ENCODE measurements at regions of chr6 and their contacts with region 1.

Region 1: GRCh38 chr6:2738373-2738979 is 12.2 kb downstream of the MYLK4 start:
- DNase-seq: peak; percentile 70
- ATAC-seq: peak; percentile 62
- H3K4me3 Mint-ChIP-seq: no peak overlapping the region
- H3K27ac Mint-ChIP-seq: no peak overlapping the region
- H3K4me1 Mint-ChIP-seq: peaks cover 5% of the 10 kb centered on the region
- H3K27me3 Mint-ChIP-seq: no peaks in the 10 kb centered on the region

Region 2: DNA sequence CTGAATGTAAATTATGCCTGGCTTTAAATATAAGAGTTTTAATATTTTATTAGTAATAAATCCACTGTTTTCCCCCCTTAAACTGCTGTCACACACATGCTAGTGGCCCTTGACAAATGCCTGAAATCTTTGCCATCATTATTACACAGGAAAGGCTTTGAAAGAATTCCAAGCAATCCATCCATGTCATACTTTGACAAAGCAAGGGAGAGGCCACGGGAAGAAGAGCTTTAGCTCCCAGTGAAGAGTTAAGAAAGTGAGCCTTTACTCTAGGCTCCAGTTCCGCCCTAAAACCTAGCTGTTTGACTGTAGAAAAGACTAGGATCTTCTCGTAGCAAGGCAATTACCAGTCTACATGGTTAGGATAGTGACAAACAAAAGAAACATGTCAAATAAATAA is 641.0 kb before region 1 on chr6:
- CTCF ChIA-PET with region 1: no interaction called
- POLR2A ChIA-PET with region 1: no interaction called
- intact Hi-C with region 1: no loop called
- DNase-seq: no peak
- ATAC-seq: no peak
- H3K4me3 Mint-ChIP-seq: no peak overlapping the region
- H3K27ac Mint-ChIP-seq: no peak overlapping the region
- H3K4me1 Mint-ChIP-seq: no peaks in the 10 kb centered on the region
- H3K27me3 Mint-ChIP-seq: no peaks in the 10 kb centered on the region

Region 3: DNA sequence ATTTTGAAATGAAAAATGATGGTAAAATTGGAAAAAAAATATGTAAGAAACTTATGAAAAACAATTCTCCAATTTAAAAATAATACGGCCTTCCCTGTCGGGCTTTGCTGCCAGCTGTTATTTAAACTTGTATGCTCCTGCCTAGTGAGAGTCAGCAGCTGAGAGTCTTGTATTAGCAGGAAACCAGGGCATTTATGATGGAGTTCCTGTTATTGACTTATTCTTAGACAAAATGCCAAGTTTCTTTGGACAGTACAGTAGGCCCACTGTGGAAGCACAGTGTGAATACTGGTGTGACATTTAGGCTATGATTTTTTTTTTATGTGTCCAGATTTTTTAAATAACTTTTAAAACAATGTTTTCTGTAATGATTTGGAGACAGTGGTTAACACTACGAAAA is 535.2 kb before region 1 on chr6:
- CTCF ChIA-PET with region 1: no interaction called
- POLR2A ChIA-PET with region 1: no interaction called
- intact Hi-C with region 1: no loop called
- DNase-seq: no peak
- ATAC-seq: no peak
- H3K4me3 Mint-ChIP-seq: no peak overlapping the region
- H3K27ac Mint-ChIP-seq: no peak overlapping the region
- H3K4me1 Mint-ChIP-seq: no peaks in the 10 kb centered on the region
- H3K27me3 Mint-ChIP-seq: no peaks in the 10 kb centered on the region

Region 4: DNA sequence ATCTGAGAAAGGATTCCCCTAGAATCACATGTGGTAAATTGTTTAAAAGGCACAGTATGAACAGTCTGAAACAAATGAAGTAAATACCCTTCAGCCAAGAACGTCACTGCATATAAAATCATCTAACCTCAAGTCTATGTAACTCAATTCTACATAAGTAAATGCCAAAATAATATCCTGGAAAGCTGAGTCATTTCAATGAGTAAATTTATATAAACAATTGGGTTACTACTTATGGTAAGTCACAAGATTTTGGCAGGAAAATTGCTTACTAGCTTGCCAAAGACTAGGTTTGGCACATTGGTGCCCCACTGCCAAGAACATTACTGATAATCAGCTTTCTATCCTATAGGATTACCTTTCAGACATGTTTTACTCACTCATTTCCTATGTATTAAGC is 501.5 kb before region 1 on chr6:
- CTCF ChIA-PET with region 1: no interaction called
- POLR2A ChIA-PET with region 1: no interaction called
- intact Hi-C with region 1: loop called in 1 of 2 experiments (anchors 10 kb)
- DNase-seq: no peak
- ATAC-seq: peak; percentile 36
- H3K4me3 Mint-ChIP-seq: no peak overlapping the region
- H3K27ac Mint-ChIP-seq: no peak overlapping the region
- H3K4me1 Mint-ChIP-seq: peaks cover 37% of the 10 kb centered on the region
- H3K27me3 Mint-ChIP-seq: no peaks in the 10 kb centered on the region

Region 5: DNA sequence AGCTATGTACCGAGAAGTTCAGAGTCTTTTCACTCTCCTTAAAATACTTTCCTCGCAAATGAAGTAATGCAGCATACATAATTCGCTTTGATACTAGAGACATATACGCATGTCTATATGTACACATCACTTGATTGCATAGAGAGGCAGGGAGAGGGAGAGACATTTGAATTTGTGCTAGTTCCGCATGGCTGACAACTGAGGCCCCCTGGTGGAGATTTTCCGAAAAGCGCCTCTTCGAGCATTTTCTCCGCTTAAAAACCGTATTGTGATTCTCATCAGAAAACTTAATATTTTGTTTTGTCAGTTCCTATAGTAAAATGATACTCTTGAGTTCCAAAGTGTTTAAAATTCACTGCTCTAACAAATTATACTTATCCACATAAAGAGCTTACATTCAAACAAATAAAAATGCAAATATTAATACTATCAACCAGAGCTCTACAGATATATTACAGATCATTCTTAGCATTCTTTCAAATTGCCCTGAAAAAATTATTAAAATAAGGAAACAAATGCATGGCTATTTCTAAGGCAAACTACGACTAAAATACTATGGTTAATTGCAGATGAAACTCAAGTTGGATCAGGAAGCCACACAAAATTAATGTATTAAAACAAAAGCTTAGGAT is 11.6 kb after region 1 on chr6:
- CTCF ChIA-PET with region 1: interaction called, 101 read pairs
- POLR2A ChIA-PET with region 1: no interaction called
- intact Hi-C with region 1: loop called in 1 of 2 experiments (anchors 1 kb)
- DNase-seq: peak; percentile 83
- ATAC-seq: peak; percentile 66
- H3K4me3 Mint-ChIP-seq: no peak overlapping the region
- H3K27ac Mint-ChIP-seq: no peak overlapping the region
- H3K4me1 Mint-ChIP-seq: peaks cover 3% of the 10 kb centered on the region
- H3K27me3 Mint-ChIP-seq: peaks cover 8% of the 10 kb centered on the region

Measured in activated CD4-positive, alpha-beta T cell treated with anti-CD3 and anti-CD28 coated beads for 36 hours (primary cell).